AG04450 (cell line): ENCODE measurements at regions of chr22 and their contacts with region 1.

Region 1: DNA sequence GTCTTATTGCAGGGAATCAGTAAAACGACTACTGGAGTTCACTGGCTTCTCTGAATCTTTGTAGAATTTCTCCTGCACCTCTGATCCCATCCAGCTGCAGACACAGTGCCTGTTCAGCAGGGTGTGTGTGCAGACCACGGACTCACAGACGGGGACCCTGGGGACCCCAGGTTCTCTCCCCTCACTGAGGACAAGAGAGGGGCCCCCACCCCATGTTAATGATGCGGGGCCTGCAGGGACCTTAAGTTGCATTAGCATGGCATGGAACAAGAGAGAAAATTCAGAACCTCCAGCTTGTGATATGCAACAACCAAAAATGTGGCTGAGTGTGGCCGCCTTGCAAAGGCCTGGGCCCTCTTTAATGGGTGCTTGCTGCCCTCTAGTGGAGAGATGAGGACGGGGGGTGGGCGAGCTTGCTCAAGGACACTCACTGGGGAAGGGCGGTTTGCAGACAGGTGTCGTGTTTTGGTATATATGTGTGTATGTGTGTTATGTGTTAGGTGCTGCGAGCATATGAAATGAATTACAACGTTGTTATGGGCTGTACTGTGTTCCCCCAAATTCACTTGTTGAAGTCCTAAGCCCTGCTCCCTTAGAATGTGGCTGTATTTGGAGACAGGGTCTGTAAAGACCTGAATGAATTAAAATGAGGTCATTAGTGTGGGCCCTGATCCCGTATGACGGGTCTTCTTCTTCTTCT is 84.4 kb upstream of the SEPTIN5 start:
- DNase-seq: peak; percentile 43
- H3K4me3 ChIP-seq: no peak overlapping the region
- H3K27ac ChIP-seq: no peak overlapping the region
- H3K27me3 ChIP-seq: peaks cover 9% of the 10 kb centered on the region
- CTCF ChIP-seq: peak; percentile 94

Region 2: DNA sequence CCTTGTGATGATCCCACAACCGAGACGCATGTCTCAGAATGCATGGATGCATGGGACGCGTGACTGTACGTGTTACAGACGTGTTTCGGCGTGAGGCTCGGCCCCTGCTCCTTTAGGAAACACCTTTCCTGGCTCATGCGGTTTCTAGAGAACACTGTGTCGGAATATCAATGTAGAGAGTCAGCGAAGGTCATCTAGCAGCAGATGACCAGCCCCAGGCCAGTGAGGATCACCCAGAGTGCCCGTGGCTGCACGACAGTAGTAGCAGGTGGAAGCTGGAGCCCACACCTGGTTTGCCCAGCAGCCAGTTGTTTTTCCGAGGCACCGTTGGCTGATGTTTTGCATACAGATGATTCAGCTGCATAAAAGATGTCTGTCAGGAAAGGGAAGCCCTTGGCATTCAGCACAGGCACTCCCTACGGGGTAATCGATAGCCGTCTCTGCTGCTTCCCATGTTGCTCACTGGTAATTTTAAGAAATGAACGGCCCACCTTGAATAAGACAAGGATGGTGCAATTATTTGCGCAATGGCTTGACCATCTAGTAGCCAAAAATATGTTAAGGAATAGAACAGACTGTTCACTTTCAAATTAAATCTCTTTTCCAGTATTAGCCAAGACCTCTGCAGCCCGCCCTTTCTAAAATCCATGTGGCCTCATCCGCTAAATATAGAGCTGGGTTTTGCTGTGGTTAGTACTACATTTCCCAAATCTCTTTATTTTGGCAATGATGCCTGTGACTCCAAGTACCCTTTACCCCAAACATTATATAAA is 337.2 kb before region 1 on chr22:
- CTCF ChIA-PET with region 1: interaction called, 38 read pairs
- POLR2A ChIA-PET with region 1: no interaction called
- DNase-seq: no peak
- H3K4me3 ChIP-seq: peak overlapping the region; percentile 81
- H3K27ac ChIP-seq: no peak overlapping the region
- H3K27me3 ChIP-seq: peaks cover 4% of the 10 kb centered on the region
- CTCF ChIP-seq: no peak

Region 3: GRCh38 chr22:19473578-19473977 is 156.3 kb before region 1 on chr22:
- CTCF ChIA-PET with region 1: interaction called, 26 read pairs
- POLR2A ChIA-PET with region 1: no interaction called
- DNase-seq: no peak
- H3K4me3 ChIP-seq: no peak overlapping the region
- H3K27ac ChIP-seq: no peak overlapping the region
- H3K27me3 ChIP-seq: no peaks in the 10 kb centered on the region
- CTCF ChIP-seq: no peak

Region 4: GRCh38 chr22:19495562-19496323 is 134.1 kb before region 1 on chr22:
- CTCF ChIA-PET with region 1: interaction called, 27 read pairs
- POLR2A ChIA-PET with region 1: no interaction called
- DNase-seq: no peak
- H3K4me3 ChIP-seq: no peak overlapping the region
- H3K27ac ChIP-seq: no peak overlapping the region
- H3K27me3 ChIP-seq: no peaks in the 10 kb centered on the region
- CTCF ChIP-seq: peak; percentile 38

Region 5: DNA sequence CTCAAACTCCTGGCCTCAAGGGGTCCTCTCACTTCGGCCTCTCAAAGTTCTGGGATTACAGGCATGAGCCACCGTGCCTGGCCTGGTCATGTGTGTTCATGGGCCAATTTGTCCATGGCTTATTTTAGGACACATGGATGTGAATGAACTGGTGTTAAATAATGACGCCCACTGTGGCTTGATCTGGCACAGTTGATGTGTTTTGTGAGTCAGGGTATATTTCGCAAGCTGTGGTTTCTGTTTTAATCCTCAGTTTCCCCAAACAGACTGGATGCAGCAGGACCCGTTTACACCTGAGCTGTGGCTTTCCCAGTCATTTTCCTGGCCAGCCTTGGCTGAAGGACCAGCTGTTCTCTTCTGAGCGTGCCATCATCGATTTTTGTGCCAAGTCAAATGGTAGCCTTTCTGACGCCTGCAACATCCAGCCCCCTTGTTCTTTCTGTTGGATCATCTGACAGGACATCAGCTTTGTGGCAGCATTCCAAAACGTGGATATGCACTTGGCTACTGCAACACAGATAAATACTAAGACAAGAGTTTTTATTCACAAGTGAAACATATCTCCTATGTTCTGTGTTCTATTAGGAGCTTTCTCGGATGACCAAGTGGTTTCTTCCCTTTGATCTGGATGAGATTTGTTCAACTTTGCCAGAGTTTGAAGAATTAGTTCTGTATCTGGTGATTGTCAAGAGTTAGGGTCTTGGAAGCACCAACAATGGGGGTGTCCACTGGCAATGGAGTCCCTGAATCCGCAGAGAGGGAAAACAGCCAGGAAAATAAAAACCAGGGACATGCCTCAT is 44.5 kb after region 1 on chr22:
- CTCF ChIA-PET with region 1: no interaction called
- POLR2A ChIA-PET with region 1: no interaction called
- DNase-seq: no peak
- H3K4me3 ChIP-seq: no peak overlapping the region
- H3K27ac ChIP-seq: no peak overlapping the region
- H3K27me3 ChIP-seq: peaks cover 23% of the 10 kb centered on the region
- CTCF ChIP-seq: no peak

Region 6: GRCh38 chr22:19723983-19724827 is 94.3 kb after region 1 on chr22:
- CTCF ChIA-PET with region 1: no interaction called
- POLR2A ChIA-PET with region 1: no interaction called
- DNase-seq: no peak
- H3K4me3 ChIP-seq: no peak overlapping the region
- H3K27ac ChIP-seq: no peak overlapping the region
- H3K27me3 ChIP-seq: peaks cover 7% of the 10 kb centered on the region
- CTCF ChIP-seq: no peak